Right ventricle myocardium inferior (tissue), 1 donor: ENCODE measurements at regions of chr1 and their contacts with region 1.

Region 1: DNA sequence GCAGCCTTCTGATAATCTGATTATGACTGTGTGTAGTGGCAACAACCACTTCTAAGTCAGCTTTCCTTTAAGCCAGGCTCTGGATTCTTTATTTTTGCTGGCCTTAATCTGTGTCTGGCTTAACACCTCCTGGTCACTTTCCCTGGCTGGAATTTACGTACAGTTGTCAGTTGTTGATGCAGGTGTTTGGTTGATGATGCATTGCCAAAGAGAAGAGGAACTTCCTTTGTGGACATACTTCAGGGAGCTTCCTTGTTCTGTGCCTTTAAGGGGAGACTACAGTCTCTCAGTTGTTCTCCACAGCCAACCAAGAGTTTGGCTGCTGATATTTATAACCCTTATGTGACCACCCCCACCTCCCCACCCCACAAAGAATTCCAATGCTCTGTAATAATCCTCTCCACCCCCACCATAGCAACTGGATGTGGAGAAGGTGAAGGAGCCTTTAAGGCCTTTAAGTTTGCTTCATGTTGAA is 96.0 kb upstream of the BMP8A start:
- DNase-seq: no peak
- ATAC-seq: peak; percentile 31

Region 2: GRCh38 chr1:39408641-39409054 is 13.3 kb after region 1 on chr1:
- intact Hi-C with region 1: loop called (anchors 2 kb)
- DNase-seq: peak; percentile 97
- ATAC-seq: peak; percentile 94

Region 3: DNA sequence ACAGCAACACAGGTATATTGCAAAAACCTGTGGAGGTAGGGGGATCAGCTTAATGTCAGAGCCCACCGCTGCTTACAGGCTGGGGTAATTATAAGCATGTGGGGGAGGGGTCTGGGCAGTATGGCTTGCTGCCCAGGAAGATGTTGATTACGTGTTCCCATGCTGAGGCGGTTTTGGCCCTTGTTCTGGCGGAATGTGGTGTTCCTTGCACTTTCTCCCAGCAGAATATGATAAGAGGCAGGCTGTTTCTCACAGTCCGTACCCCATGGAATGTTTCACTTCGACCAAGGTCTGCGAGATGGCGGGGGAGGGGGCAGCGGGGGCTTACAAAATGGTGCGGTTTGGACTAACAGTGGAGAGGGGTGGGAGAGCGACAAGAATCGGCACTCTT is 305.6 kb after region 1 on chr1:
- intact Hi-C with region 1: no loop called
- DNase-seq: no peak
- ATAC-seq: peak; percentile 67